B cell (primary cell): ENCODE measurements at regions of chr22 and their contacts with region 1.

Region 1: GRCh38 chr22:43993027-43993760 is 30.9 kb upstream of the PARVB start:
- DNase-seq: peak; percentile 82
- ATAC-seq: peak; percentile 65
- H3K4me3 ChIP-seq: no peak overlapping the region
- H3K4me3 Mint-ChIP-seq: no peak overlapping the region
- H3K27ac ChIP-seq: peak overlapping the region in 1 of 2 donors; percentile 94
- H3K27ac Mint-ChIP-seq: peak overlapping the region; percentile 59
- H3K4me1 ChIP-seq: peaks cover 27 to 40% of the 10 kb centered on the region in 2 donors
- H3K4me1 Mint-ChIP-seq: peaks cover 46% of the 10 kb centered on the region
- H3K27me3 ChIP-seq: no peaks in the 10 kb centered on the region
- H3K27me3 Mint-ChIP-seq: no peaks in the 10 kb centered on the region
- CTCF ChIP-seq: peak; percentile 97

Region 2: GRCh38 chr22:43980996-43981395 is 12.2 kb before region 1 on chr22:
- CTCF ChIA-PET with region 1: interaction called, 23 read pairs
- POLR2A ChIA-PET with region 1: no interaction called
- intact Hi-C with region 1: no loop called
- DNase-seq: no peak
- ATAC-seq: no peak
- H3K4me3 ChIP-seq: no peak overlapping the region
- H3K4me3 Mint-ChIP-seq: no peak overlapping the region
- H3K27ac ChIP-seq: no peak overlapping the region
- H3K27ac Mint-ChIP-seq: no peak overlapping the region
- H3K4me1 ChIP-seq: no peaks in the 10 kb centered on the region
- H3K4me1 Mint-ChIP-seq: no peaks in the 10 kb centered on the region
- H3K27me3 ChIP-seq: no peaks in the 10 kb centered on the region
- H3K27me3 Mint-ChIP-seq: no peaks in the 10 kb centered on the region
- CTCF ChIP-seq: no peak

Region 3: GRCh38 chr22:44026630-44027511 is 33.7 kb after region 1 on chr22:
- CTCF ChIA-PET with region 1: interaction called, 29 read pairs
- POLR2A ChIA-PET with region 1: interaction called, 3 read pairs
- intact Hi-C with region 1: loop called (anchors 1 kb)
- DNase-seq: peak; percentile 96
- ATAC-seq: peak; percentile 56
- H3K4me3 ChIP-seq: peak overlapping the region in 4 of 5 experiments; percentile 56 to 75 (median 68)
- H3K4me3 Mint-ChIP-seq: peak overlapping the region; percentile 92
- H3K27ac ChIP-seq: peak overlapping the region; percentile 99 to 100
- H3K27ac Mint-ChIP-seq: peak overlapping the region; percentile 97
- H3K4me1 ChIP-seq: peaks cover 64 to 72% of the 10 kb centered on the region in 2 donors
- H3K4me1 Mint-ChIP-seq: peaks cover 77% of the 10 kb centered on the region
- H3K27me3 ChIP-seq: no peaks in the 10 kb centered on the region
- H3K27me3 Mint-ChIP-seq: no peaks in the 10 kb centered on the region
- CTCF ChIP-seq: no peak

Region 4: DNA sequence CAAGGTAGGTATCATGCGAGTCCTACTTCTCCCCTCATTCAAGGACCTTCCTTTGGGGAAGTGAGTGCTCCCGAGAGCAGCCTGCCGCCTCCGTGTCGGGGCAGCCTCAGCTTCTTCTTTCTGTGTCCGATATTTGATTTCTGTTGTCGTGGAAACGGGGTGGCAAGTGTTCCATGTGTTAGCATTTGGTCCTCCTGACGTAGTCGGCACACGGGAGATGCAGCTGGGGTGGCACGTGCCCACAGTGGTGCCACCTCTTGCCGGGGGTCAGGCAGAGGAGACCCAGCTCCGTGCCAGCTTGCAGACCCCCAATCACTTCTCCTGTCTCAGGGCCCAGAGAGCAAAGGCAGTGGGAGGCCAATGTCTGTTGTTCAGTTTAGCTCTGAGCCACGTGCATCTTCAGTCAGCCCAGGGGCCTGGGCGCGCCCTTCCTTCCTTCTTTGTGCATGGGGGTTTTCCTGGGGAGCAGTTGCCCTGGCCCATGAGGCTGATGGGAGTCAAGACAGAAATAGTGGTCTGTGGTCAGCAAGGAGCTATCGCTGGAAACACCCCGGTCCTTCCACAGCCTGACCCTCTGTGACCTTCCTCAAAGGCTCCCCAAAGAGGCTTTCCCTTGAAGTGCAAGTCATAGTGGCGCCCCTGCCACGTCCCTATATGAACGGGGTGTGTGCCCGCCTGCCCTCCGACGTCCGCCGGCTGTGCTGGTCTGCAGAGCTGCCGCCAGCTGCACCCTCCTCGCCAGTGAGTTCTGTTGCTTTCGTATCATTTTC is 75.4 kb after region 1 on chr22:
- CTCF ChIA-PET with region 1: interaction called, 90 read pairs
- POLR2A ChIA-PET with region 1: no interaction called
- intact Hi-C with region 1: loop called (anchors 1 kb)
- DNase-seq: peak; percentile 96
- ATAC-seq: peak; percentile 71
- H3K4me3 ChIP-seq: peak overlapping the region in 4 of 5 experiments; percentile 12 to 48 (median 26)
- H3K4me3 Mint-ChIP-seq: peak overlapping the region; percentile 89
- H3K27ac ChIP-seq: peak overlapping the region; percentile 91 to 94
- H3K27ac Mint-ChIP-seq: peak overlapping the region; percentile 99
- H3K4me1 ChIP-seq: peaks cover 39% of the 10 kb centered on the region in 2 donors
- H3K4me1 Mint-ChIP-seq: peaks cover 60% of the 10 kb centered on the region
- H3K27me3 ChIP-seq: no peaks in the 10 kb centered on the region
- H3K27me3 Mint-ChIP-seq: no peaks in the 10 kb centered on the region
- CTCF ChIP-seq: no peak

Region 5: DNA sequence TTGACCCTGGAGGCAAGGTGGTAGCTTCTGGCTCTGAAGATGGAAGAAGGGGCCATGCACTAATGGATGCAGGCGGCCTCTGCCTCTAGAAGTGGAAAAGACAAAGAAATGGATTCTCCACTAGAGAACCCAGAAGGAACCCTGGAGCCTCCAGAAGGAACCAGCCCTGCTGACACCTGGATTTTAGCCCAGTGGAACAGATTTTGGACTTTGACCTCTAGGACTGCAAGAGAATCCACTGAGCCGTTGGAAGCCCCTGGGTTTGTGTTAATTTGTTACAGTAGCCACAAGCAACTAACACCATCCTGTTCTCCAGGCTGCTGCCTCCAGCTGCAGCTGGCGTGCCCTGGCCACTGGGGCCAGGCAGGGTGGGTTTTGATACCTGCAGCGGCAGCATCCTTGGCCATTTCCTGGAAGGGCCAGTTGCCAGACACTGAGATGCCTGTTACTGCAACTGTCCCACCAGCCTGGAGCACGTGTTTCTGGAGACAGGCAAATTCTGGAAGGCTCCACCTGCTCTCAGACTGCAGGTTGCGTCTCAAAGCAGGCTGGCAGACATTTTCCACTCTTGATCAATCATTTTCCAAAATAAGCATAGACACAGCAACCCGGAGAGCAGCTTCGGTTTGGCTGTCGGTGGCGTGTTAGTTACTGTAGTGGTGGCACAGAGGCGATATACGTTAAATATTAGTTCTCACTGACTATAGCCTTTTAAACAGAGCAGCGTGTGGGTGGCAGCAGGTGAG is 110.7 kb after region 1 on chr22:
- CTCF ChIA-PET with region 1: interaction called, 11 read pairs
- POLR2A ChIA-PET with region 1: no interaction called
- intact Hi-C with region 1: no loop called
- DNase-seq: no peak
- ATAC-seq: no peak
- H3K4me3 ChIP-seq: no peak overlapping the region
- H3K4me3 Mint-ChIP-seq: no peak overlapping the region
- H3K27ac ChIP-seq: no peak overlapping the region
- H3K27ac Mint-ChIP-seq: no peak overlapping the region
- H3K4me1 ChIP-seq: no peaks in the 10 kb centered on the region
- H3K4me1 Mint-ChIP-seq: peaks cover 4% of the 10 kb centered on the region
- H3K27me3 ChIP-seq: no peaks in the 10 kb centered on the region
- H3K27me3 Mint-ChIP-seq: no peaks in the 10 kb centered on the region
- CTCF ChIP-seq: no peak

Region 6: DNA sequence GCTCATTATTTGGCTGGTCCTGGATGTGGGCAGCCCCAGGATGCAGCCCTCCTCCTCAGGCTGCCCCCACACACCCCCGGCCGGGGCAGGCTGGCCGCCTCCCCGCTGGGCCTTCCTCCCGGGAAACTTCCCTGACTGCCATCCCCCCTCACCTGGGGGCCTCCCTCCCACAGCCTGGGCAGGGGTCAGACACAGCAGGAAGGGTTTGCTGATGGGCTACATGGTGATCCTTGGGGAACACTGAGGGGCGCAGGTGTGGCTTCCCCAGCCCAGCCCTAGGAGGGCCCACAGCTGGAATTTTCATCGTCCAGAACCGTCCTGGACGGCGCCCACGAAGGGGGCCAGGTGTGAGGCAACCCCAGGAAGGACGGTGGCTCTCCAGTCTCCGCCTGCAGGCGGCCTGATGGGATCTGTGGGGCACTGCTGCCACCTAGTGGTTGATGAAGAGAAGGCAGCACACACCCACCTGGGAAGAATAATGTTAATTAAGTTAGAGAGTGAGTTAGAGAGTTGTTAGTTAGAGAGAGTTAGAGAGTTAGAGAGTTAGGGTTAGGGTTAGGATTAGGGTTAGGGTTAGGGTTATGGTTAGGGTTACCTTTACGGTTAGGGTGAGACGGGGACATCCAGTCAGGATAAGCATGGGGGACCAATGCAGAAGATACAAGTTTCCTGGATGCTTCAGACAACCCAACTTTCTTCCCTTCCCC is 632.9 kb after region 1 on chr22:
- CTCF ChIA-PET with region 1: interaction called, 57 read pairs
- POLR2A ChIA-PET with region 1: interaction called, 3 read pairs
- intact Hi-C with region 1: no loop called
- DNase-seq: peak; percentile 80
- ATAC-seq: peak; percentile 87
- H3K4me3 ChIP-seq: no peak overlapping the region
- H3K4me3 Mint-ChIP-seq: no peak overlapping the region
- H3K27ac ChIP-seq: no peak overlapping the region
- H3K27ac Mint-ChIP-seq: no peak overlapping the region
- H3K4me1 ChIP-seq: peaks cover 0 to 3% of the 10 kb centered on the region in 2 donors
- H3K4me1 Mint-ChIP-seq: no peaks in the 10 kb centered on the region
- H3K27me3 ChIP-seq: peaks cover 0 to 5% (median 0%) of the 10 kb centered on the region in 4 experiments
- H3K27me3 Mint-ChIP-seq: peaks cover 7% of the 10 kb centered on the region
- CTCF ChIP-seq: peak; percentile 99